Heart left ventricle (tissue), 16 donors: ENCODE measurements at regions of chr2 and their contacts with region 1.

Region 1: GRCh38 chr2:25294573-25295462 is 46.9 kb downstream of the DNMT3A start:
- DNase-seq: peak; percentile 87 to 92 (median 88)
- ATAC-seq: peak; percentile 91 to 94 (median 92)
- H3K4me3 ChIP-seq: peak overlapping the region in 10 of 12 donors; percentile 10 to 46 (median 32)
- H3K27ac ChIP-seq: peak overlapping the region; percentile 79 to 99 (median 95)
- H3K4me1 ChIP-seq: peaks cover 10 to 68% (median 53%) of the 10 kb centered on the region in 12 donors
- H3K27me3 ChIP-seq: no peaks in the 10 kb centered on the region
- CTCF ChIP-seq: peak in 1 of 12 donors; percentile 1
- POLR2A ChIP-seq: peak in 1 of 2 donors; percentile 38

Region 2: GRCh38 chr2:24797644-24798043 is 497.2 kb before region 1 on chr2:
- intact Hi-C with region 1: no loop called
- DNase-seq: no peak
- ATAC-seq: no peak
- H3K4me3 ChIP-seq: no peak overlapping the region
- H3K27ac ChIP-seq: no peak overlapping the region
- H3K4me1 ChIP-seq: peaks cover 0 to 17% (median 2%) of the 10 kb centered on the region in 12 donors
- H3K27me3 ChIP-seq: no peaks in the 10 kb centered on the region
- CTCF ChIP-seq: no peak
- POLR2A ChIP-seq: no peak

Region 3: DNA sequence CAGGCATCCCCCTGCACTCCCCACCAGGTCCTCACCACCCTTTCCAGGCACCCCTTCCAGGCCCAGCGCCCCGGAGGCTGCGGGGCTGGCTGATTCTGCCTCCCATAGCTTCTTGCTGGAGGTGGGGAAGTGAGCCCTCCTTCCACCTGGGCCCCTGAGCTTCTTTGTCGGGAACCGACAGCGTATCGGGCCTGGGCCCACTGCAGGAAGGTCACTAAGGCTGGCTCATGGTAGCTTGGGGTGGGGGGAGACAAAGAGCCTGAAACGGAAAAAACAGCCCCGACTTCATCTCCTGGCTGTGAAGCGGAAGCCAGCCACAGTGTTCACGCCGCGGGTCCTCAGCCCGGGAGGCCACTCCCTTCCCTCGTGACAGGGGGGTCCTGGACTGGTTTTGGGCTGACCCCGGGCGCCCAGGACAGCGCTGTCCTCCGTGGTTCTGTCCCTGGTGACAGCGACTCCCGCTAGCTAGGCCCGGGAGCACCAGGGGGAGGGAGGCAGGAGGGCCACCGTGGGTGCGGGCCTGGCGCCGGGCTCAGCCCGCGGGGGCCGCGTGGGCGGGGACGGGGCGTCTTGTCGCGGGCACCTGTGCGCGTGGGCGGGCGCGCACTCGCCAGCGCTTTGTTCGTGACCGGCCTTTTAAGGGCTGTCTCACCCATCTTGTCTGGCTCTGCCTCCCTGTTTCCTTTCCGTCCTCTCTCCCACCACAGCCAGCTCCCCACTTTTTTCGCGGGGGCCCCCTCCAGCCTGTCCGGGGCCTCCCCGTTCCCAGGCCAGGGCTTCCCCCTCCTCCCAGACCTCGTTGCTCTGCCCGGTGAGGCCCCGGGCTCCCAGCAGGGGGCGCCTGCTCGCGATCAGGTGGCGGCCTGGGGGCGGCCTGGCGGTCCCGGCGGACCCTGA is 18.0 kb before region 1 on chr2:
- intact Hi-C with region 1: loop called in 1 of 10 experiments (anchors 2 kb)
- DNase-seq: peak; percentile 67 to 90 (median 72)
- ATAC-seq: peak in 3 of 4 donors; percentile 18 to 68 (median 56)
- H3K4me3 ChIP-seq: peak overlapping the region in 11 of 12 donors; percentile 14 to 59 (median 47)
- H3K27ac ChIP-seq: peak overlapping the region; percentile 66 to 94 (median 83)
- H3K4me1 ChIP-seq: peaks cover 0 to 76% (median 55%) of the 10 kb centered on the region in 12 donors
- H3K27me3 ChIP-seq: no peaks in the 10 kb centered on the region
- CTCF ChIP-seq: peak; percentile 70 to 92 (median 81)
- POLR2A ChIP-seq: no peak